Esophagus muscularis mucosa (tissue), 4 donors: ENCODE measurements at regions of chr11 and their contacts with region 1.

Region 1: DNA sequence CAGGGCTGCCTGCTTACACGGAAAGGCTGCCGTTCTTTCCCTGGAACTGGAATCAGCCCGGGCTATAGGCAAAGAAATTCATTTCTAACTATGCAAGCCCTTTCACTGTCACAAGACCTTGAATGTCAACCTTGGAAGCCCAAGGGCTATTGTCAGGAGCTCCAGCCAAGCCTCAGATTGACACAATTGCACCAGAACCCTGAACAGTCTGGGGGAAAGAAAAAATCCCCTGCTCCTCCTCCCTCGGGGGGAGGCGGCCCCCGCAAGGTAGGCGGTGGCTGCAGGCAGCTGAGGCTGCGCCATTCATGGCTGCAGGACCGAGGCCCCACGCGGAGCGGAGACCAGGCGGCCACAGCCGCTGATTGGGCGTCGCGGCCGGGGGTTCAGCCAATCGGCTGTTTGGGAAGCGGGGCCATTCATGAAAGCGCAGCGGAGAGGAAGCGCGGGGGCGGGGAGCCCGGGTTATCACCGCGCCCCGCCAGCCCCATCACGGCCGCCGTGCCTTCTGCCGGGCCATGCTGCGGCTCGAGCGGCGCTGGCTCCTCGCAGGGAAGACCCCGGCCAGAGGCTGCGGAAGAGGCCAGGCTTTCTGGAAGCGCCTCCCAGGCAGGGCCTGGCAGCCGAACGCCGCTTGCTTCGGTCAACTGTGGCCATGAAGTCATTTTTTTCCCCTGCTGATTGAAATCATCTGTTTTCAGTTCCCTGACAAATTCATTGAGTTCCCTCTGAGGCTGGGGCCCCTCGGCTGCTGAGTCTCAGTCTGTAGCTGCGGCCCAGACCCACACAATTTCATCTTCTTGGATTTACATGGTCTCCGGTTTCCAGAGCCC is 38.1 kb upstream of the LINC01488 start:
- DNase-seq: peak; percentile 97
- H3K4me3 ChIP-seq: peak overlapping the region; percentile 53 to 63 (median 54)
- H3K27ac ChIP-seq: peak overlapping the region; percentile 73 to 87 (median 82)
- H3K4me1 ChIP-seq: peaks cover 34 to 40% (median 36%) of the 10 kb centered on the region in 4 donors
- H3K27me3 ChIP-seq: no peaks in the 10 kb centered on the region
- CTCF ChIP-seq: no peak
- EP300 ChIP-seq: no peak
- POLR2A ChIP-seq: no peak

Region 2: DNA sequence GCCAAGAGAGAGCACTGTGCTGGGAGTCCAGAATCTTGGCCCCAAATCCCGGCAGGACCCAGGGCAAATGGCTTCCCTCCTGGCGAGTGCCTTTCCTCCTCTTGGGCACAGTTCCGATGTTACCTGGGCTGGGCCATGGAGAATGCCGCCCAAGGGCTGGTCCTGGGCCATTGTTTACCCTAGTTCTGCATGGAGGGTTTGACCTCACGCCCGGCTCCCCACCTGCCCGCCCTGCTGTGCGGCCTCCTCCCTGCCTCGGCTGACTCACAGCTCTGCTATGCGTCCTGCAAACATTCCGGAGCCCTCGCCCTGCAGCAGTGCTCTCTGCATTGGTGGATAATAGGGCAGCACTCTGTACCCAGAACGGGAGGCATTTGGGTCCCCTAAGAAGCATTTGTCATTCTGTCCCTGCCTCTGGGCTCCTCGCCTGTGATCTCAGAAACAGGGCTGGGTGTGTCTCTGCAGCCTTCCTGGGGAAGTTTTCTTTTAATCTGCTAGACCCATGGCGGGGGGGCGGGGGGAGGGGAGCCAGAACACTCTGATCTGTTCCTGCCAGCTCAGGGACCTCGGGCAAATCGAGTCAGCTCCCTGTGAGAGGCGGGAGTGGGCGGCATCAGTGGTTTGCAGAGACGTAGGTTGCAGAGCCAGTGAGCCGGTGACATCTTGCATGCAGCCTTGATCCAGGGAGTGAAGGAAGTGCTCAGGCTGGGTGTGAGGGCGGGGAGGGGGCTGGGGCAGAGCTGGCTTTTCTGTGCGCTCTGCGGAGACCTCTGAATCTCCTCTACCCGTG is 320.5 kb before region 1 on chr11:
- intact Hi-C with region 1: loop called (anchors 10 kb)
- DNase-seq: no peak
- H3K4me3 ChIP-seq: peak overlapping the region; percentile 1 to 17 (median 13)
- H3K27ac ChIP-seq: peak overlapping the region; percentile 53 to 78 (median 70)
- H3K4me1 ChIP-seq: peaks cover 30 to 43% (median 39%) of the 10 kb centered on the region in 4 donors
- H3K27me3 ChIP-seq: no peaks in the 10 kb centered on the region
- CTCF ChIP-seq: no peak
- EP300 ChIP-seq: no peak
- POLR2A ChIP-seq: no peak

Region 3: GRCh38 chr11:69296890-69297786 is 146.2 kb before region 1 on chr11:
- intact Hi-C with region 1: loop called (anchors 10 kb)
- DNase-seq: peak; percentile 97
- H3K4me3 ChIP-seq: peak overlapping the region; percentile 26 to 32 (median 28)
- H3K27ac ChIP-seq: peak overlapping the region; percentile 66 to 79 (median 74)
- H3K4me1 ChIP-seq: peaks cover 40 to 72% (median 56%) of the 10 kb centered on the region in 4 donors
- H3K27me3 ChIP-seq: peaks cover 0 to 18% (median 0%) of the 10 kb centered on the region in 4 donors
- CTCF ChIP-seq: no peak
- EP300 ChIP-seq: no peak
- POLR2A ChIP-seq: no peak

Region 4: DNA sequence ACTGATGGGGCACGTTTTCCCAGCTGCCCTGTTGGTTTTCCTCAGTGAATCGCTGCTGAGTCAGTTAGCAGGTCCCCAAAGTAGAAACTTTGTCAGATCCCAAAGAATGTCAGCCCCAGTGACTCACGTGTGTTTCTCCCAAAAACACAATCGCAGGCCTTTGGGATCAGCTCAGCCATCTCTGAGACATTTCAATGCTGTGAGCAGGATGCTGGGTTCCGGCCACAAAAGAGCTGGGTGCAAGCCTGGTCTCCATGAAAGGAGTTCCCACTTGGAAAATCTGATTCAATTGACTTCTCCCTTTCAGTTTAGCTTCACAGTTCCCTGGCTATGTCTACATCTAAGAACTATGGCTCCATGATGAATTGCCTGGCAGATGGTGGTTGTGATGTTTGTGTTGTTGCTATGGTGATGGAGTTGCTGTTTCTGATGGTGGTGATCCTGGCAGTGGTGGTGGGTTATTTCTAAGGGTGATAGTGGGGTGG is 121.4 kb before region 1 on chr11:
- intact Hi-C with region 1: no loop called
- DNase-seq: no peak
- H3K4me3 ChIP-seq: no peak overlapping the region
- H3K27ac ChIP-seq: no peak overlapping the region
- H3K4me1 ChIP-seq: no peaks in the 10 kb centered on the region
- H3K27me3 ChIP-seq: no peaks in the 10 kb centered on the region
- CTCF ChIP-seq: no peak
- EP300 ChIP-seq: no peak
- POLR2A ChIP-seq: no peak

Region 5: GRCh38 chr11:69353696-69354544 is 89.4 kb before region 1 on chr11:
- intact Hi-C with region 1: no loop called
- DNase-seq: peak; percentile 66
- H3K4me3 ChIP-seq: no peak overlapping the region
- H3K27ac ChIP-seq: no peak overlapping the region
- H3K4me1 ChIP-seq: no peaks in the 10 kb centered on the region
- H3K27me3 ChIP-seq: peaks cover 0 to 55% (median 0%) of the 10 kb centered on the region in 4 donors
- CTCF ChIP-seq: no peak
- EP300 ChIP-seq: no peak
- POLR2A ChIP-seq: no peak

Region 6: DNA sequence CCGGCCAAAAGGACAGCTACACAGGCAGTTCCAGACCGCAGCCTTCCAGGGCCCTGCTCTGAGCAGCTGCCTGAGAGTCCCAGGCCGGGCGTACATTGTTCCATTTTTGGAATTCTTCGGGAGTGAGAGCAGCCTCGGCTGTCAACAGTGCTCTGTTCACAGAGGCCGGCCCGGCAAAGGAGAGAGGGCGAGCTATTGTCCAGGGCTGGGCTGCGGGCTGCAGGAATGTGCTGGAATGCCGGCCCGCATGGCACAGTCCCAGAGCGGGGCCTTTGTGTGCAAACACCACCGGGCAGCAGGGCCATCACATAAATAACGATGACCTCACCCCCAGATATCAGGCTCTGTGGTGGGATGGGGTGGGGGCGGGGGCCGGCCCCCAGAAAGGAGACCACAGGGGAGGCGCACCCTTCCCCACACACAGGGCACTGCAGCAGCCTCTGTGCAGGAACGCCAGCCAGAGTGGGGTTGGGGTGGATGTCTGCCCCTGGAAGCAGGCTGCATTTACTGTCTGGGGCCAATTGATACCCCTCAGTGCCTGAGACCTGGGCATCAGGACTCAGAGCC is 54.0 kb after region 1 on chr11:
- intact Hi-C with region 1: loop called (anchors 2 kb)
- DNase-seq: no peak
- H3K4me3 ChIP-seq: no peak overlapping the region
- H3K27ac ChIP-seq: peak overlapping the region; percentile 81 to 86 (median 84)
- H3K4me1 ChIP-seq: peaks cover 21 to 49% (median 38%) of the 10 kb centered on the region in 4 donors
- H3K27me3 ChIP-seq: no peaks in the 10 kb centered on the region
- CTCF ChIP-seq: no peak
- EP300 ChIP-seq: no peak
- POLR2A ChIP-seq: no peak